Activated naive CD4-positive, alpha-beta T cell treated with anti-CD3 and anti-CD28 coated beads for 36 hours (primary cell): ENCODE measurements at regions of chr4 and their contacts with region 1.

Region 1: GRCh38 chr4:183714626-183715025 is 55.5 kb downstream of the TRAPPC11 start:
- DNase-seq: no peak
- H3K4me3 Mint-ChIP-seq: no peak overlapping the region
- H3K27ac Mint-ChIP-seq: no peak overlapping the region
- H3K4me1 Mint-ChIP-seq: no peaks in the 10 kb centered on the region
- H3K27me3 Mint-ChIP-seq: no peaks in the 10 kb centered on the region

Region 2: GRCh38 chr4:183335369-183335940 is 379.2 kb before region 1 on chr4:
- CTCF ChIA-PET with region 1: no interaction called
- intact Hi-C with region 1: no loop called
- DNase-seq: no peak
- H3K4me3 Mint-ChIP-seq: no peak overlapping the region
- H3K27ac Mint-ChIP-seq: no peak overlapping the region
- H3K4me1 Mint-ChIP-seq: peaks cover 4% of the 10 kb centered on the region
- H3K27me3 Mint-ChIP-seq: peaks cover 8% of the 10 kb centered on the region

Region 3: GRCh38 chr4:183636923-183637322 is 77.7 kb before region 1 on chr4:
- CTCF ChIA-PET with region 1: no interaction called
- intact Hi-C with region 1: loop called (anchors 1 kb)
- DNase-seq: no peak
- H3K4me3 Mint-ChIP-seq: no peak overlapping the region
- H3K27ac Mint-ChIP-seq: no peak overlapping the region
- H3K4me1 Mint-ChIP-seq: peaks cover 24% of the 10 kb centered on the region
- H3K27me3 Mint-ChIP-seq: peaks cover 2% of the 10 kb centered on the region

Region 4: GRCh38 chr4:183686461-183686860 is 28.2 kb before region 1 on chr4:
- CTCF ChIA-PET with region 1: no interaction called
- intact Hi-C with region 1: no loop called
- DNase-seq: no peak
- H3K4me3 Mint-ChIP-seq: no peak overlapping the region
- H3K27ac Mint-ChIP-seq: no peak overlapping the region
- H3K4me1 Mint-ChIP-seq: no peaks in the 10 kb centered on the region
- H3K27me3 Mint-ChIP-seq: no peaks in the 10 kb centered on the region

Region 5: GRCh38 chr4:183830438-183830985 is 115.9 kb after region 1 on chr4:
- CTCF ChIA-PET with region 1: no interaction called
- intact Hi-C with region 1: no loop called
- DNase-seq: no peak
- H3K4me3 Mint-ChIP-seq: no peak overlapping the region
- H3K27ac Mint-ChIP-seq: no peak overlapping the region
- H3K4me1 Mint-ChIP-seq: peaks cover 9% of the 10 kb centered on the region
- H3K27me3 Mint-ChIP-seq: no peaks in the 10 kb centered on the region